ENCODE measurements at regions of chr2 and their contacts with region 1.

Region 1: DNA sequence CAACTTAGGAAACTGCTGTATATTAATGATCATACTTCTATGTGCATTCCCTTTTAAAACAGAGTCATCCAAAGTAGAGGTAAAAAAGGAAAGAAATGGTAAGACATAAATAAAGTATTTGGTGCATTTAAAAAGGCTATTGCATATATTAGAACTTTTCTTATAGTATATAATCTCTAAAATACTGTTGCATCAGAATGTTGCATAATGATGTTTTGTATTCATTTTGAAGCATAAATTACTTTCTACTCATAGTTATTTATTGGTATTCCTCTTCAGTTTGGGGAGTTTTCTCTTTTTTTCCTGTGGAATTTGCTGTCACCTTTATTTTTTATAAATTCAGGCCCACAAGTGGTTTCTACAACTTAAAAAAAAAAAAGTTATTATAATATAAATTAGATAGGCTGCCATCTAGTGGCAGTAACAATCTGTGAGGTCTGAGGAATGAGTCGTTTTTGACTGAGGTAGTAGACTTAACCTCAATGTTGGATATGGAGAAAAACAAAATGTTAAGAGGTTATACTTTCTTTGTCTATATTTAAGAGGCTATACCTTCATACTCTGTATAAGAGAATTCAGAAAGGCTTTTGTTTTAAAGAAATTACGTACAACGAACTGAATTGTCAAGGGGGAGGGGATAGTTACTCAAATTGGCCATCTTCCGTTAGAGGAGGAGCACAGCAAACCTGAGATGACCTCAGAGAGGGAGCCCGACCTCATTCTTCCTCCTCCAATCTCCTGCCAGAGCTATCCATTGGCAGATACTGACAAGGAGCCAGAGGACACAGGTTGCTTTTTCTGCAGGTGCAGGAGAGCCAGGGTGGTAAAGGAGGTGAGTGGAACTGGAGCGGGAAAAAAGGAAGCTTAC is 23.8 kb downstream of the ANKAR start:
- DNase-seq: peak; percentile 31
- H3K4me3 Mint-ChIP-seq: no peak overlapping the region
- H3K27ac Mint-ChIP-seq: no peak overlapping the region
- H3K4me1 Mint-ChIP-seq: peaks cover 4% of the 10 kb centered on the region
- H3K27me3 Mint-ChIP-seq: no peaks in the 10 kb centered on the region

Region 2: GRCh38 chr2:189674374-189675112 is 23.7 kb before region 1 on chr2 and contains the start of gene ANKAR:
- CTCF ChIA-PET with region 1: interaction called, 11 read pairs
- POLR2A ChIA-PET with region 1: no interaction called
- DNase-seq: peak; percentile 78
- H3K4me3 Mint-ChIP-seq: peak within 1 kb of the TSS; percentile 90
- H3K27ac Mint-ChIP-seq: peak within 1 kb of the TSS; percentile 90
- H3K4me1 Mint-ChIP-seq: peaks cover 33% of the 10 kb centered on the region
- H3K27me3 Mint-ChIP-seq: no peaks in the 10 kb centered on the region
- total RNA-seq, gene ANKAR: 3.9 to 7.0 TPM

Region 3: GRCh38 chr2:189684811-189685210 is 13.4 kb before region 1 on chr2:
- CTCF ChIA-PET with region 1: interaction called, 11 read pairs
- POLR2A ChIA-PET with region 1: interaction called, 4 read pairs
- DNase-seq: no peak
- H3K4me3 Mint-ChIP-seq: no peak overlapping the region
- H3K27ac Mint-ChIP-seq: no peak overlapping the region
- H3K4me1 Mint-ChIP-seq: peaks cover 20% of the 10 kb centered on the region
- H3K27me3 Mint-ChIP-seq: no peaks in the 10 kb centered on the region

Region 4: DNA sequence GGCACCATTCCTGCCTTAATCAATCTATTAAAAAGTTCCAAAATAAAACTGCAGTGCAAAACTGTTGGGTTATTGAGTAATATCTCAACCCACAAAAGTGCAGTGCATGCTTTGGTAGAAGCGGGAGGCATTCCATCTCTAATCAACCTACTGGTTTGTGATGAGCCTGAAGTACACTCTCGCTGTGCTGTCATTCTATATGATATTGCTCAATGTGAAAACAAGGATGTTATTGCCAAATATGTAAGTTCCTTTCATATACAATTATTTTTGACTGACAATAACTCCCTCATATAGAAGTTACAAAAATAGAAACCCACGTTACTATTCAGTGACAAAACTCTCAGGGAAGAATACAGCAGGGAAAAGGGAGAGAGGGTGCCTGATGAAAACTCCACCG is 21.3 kb after region 1 on chr2:
- CTCF ChIA-PET with region 1: no interaction called
- POLR2A ChIA-PET with region 1: no interaction called
- DNase-seq: no peak
- H3K4me3 Mint-ChIP-seq: no peak overlapping the region
- H3K27ac Mint-ChIP-seq: no peak overlapping the region
- H3K4me1 Mint-ChIP-seq: peaks cover 9% of the 10 kb centered on the region
- H3K27me3 Mint-ChIP-seq: no peaks in the 10 kb centered on the region